ENCODE measurements at regions of chr11 and their contacts with region 1.

Region 1: DNA sequence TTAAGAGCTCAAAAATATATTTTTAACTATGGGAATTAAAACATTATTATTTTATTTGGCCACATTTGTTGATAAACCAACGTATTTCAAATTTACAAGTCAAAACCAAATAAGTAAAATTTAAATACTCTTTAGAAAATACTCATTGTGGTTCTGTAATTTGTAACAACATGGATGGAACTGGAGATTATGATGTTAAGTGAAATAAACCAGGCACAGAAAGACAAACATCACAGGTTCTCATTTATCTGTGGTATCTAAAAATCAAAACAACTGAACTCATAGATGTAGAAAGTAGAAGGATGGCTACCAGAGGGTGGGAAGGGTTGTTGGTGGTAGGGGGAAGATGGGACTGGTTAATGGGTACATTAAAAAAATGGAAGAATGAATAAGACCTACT is 50.8 kb downstream of the STK33 start:
- DNase-seq: no peak

Region 2: DNA sequence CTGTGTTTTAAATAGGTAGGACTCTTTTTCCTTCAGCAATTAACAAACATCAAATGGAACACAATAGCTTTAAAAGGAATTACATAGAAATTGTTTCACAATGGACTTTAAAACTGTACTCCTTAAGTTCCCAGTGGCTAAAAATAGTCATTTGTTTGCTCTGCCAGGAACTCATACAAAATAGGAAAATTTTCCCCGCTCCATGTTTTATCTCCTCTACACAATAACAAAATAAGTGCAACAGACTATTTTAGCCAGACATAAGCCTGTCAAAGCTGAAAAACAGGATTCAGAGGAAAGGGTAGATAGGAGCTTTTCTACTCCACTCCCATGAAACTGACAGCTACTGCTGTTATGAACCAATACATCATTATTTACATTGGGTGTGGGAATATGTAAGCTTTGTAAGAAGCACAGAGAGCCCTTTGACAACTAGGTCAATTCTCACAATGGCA is 39.3 kb before region 1 on chr11:
- intact Hi-C with region 1: loop called in 1 of 2 experiments (anchors 2 kb)
- DNase-seq: no peak

Region 3: GRCh38 chr11:8906629-8907028 is 363.4 kb after region 1 on chr11:
- intact Hi-C with region 1: no loop called
- DNase-seq: no peak